ENCODE measurements at regions of chr1 and their contacts with region 1.

Region 1: GRCh38 chr1:224513787-224514209 is 79.2 kb upstream of the WDR26 start:
- DNase-seq: no peak
- H3K4me3 ChIP-seq: no peak overlapping the region
- H3K27ac ChIP-seq: no peak overlapping the region
- H3K27me3 ChIP-seq: no peaks in the 10 kb centered on the region
- CTCF ChIP-seq: peak; percentile 96

Region 2: DNA sequence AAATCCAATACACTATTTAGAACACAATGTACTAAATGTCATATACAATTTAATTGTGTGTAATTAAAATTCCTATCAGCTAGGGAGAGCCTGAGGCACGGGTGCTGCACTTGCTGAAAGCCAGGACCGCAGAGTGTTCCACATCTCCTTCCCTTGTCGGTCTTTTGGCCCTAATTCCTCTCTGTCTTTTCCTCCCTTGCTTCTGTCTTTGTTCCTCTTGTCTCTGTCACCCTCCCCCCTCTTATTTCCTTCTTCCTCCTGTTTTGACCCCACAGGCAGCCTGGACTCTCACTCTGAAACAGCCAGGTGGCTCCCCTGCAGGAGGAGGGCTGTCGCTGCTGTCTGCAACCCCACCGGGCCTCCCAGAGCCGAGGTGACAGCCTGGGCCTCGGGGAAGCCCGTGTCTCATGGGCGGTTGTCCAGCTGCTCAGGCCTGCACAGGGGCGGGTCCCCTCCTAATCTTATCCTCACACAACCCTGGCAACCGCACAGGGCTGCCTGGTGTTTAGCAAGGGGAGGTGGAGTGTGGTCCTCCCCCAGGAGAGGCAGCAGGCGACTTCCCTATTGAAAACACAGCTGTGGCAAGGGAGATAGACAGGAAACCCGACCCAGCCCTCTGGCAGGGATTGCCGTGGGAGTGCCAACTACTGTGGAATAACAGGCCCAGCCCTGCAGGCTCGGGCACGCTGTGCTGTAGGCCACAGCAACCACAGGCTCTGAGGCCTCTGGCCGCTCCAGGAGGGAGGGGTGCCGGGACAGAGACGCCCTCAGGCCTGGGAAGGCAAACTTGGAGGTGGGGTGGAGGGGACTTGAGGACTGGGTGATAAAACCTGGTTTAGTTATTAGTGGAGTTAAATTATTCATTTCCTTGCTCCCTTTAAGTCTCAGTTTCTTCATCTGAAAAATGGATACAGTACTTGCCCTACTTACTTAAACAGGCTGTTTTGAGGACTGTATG is 10.4 kb before region 1 on chr1:
- CTCF ChIA-PET with region 1: interaction called, 26 read pairs
- POLR2A ChIA-PET with region 1: no interaction called
- DNase-seq: peak; percentile 52
- H3K4me3 ChIP-seq: 0 out of 2 replicates have a peak overlapping the region, but pooled peaks have one; percentile 20
- H3K27ac ChIP-seq: peak overlapping the region; percentile 82
- H3K27me3 ChIP-seq: no peaks in the 10 kb centered on the region
- CTCF ChIP-seq: peak; percentile 26; the same call in 1 of the 2 replicates

Region 3: DNA sequence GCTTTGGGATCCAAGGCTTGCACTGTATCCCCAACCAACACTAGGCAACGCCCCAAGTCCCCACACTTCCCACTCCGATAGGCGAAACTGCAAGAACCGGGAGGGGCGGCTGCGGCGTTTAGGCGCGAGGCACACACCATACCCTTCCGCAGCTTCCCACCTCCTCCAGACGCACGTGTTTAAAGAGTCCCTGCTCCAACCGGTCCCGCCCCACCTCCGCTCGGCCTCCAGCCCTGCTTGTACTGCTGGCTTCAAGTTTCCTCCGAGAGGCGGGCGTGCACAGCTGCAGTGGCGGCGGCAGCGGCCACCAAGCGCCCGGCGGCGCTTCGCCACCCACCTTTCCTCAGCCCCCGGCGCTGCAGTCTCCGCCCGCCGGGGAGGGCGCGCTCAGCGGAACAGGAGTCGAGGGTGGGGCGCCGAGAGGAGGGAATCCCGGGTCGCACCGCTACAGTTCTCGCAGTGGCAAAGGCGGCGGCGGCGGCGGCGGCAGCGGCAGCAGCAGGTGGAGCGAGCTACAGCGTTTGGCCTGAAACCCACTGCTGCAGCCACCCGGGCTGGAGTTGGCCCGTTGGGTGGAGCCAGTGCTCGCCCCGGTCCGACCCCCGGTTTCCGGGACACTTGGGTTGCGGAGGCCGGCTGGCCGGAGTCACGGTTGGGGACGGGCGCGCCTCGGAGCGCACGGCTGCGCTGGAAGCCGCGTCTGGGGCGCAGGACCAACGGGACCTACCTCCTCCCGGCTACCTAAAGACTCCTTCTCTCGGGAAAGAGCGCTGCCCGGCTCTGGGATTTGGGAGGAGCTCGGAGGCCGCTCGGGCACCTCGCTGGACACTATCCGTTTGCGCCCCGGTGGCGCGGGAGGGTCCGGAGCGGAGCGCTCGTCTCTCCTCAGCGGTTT is 102.3 kb after region 1 on chr1 and contains the start of gene CNIH3:
- CTCF ChIA-PET with region 1: interaction called, 18 read pairs
- POLR2A ChIA-PET with region 1: no interaction called
- DNase-seq: no peak
- H3K4me3 ChIP-seq: peak within 1 kb of the TSS; percentile 70
- H3K27ac ChIP-seq: no peak within 1 kb of the TSS
- H3K27me3 ChIP-seq: peaks cover 19% of the 10 kb centered on the region
- CTCF ChIP-seq: no peak
- polyA plus RNA-seq, gene CNIH3: 5.6 and 6.5 TPM in 2 replicates

Region 4: DNA sequence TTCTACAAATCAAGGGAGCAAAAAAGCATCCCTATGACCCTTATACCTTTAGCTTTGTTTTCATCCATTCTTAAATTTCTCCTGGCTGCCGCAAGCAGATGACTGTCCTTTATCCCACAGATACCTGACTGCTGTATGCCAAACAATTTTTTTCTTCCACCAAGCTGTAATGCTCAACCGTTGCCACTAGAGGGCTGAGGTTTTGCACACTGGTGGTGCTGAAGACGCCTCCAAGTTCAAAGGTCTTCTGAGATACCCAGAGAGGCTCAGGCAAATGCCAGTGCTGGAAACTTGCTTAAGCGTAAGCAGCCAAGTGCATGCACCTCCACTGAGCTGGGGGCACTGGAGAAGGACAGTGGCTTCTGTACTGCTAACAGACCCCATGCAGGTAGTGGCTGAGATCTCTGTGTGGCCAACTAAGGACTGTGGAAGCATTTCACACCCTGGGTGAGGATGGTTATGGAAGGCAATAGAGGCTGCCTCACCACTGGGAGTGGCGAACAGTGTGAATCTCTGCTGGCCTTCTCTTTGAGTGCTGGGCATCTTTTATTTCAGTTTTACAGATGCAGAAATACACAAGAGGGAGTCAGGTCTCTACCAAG is 130.9 kb after region 1 on chr1:
- CTCF ChIA-PET with region 1: interaction called, 75 read pairs
- POLR2A ChIA-PET with region 1: no interaction called
- DNase-seq: no peak
- H3K4me3 ChIP-seq: no peak overlapping the region
- H3K27ac ChIP-seq: no peak overlapping the region
- H3K27me3 ChIP-seq: no peaks in the 10 kb centered on the region
- CTCF ChIP-seq: peak; percentile 90

Region 5: GRCh38 chr1:224668984-224669383 is 155.2 kb after region 1 on chr1:
- CTCF ChIA-PET with region 1: no interaction called
- POLR2A ChIA-PET with region 1: no interaction called
- DNase-seq: no peak
- H3K4me3 ChIP-seq: no peak overlapping the region
- H3K27ac ChIP-seq: no peak overlapping the region
- H3K27me3 ChIP-seq: no peaks in the 10 kb centered on the region
- CTCF ChIP-seq: no peak

Region 6: DNA sequence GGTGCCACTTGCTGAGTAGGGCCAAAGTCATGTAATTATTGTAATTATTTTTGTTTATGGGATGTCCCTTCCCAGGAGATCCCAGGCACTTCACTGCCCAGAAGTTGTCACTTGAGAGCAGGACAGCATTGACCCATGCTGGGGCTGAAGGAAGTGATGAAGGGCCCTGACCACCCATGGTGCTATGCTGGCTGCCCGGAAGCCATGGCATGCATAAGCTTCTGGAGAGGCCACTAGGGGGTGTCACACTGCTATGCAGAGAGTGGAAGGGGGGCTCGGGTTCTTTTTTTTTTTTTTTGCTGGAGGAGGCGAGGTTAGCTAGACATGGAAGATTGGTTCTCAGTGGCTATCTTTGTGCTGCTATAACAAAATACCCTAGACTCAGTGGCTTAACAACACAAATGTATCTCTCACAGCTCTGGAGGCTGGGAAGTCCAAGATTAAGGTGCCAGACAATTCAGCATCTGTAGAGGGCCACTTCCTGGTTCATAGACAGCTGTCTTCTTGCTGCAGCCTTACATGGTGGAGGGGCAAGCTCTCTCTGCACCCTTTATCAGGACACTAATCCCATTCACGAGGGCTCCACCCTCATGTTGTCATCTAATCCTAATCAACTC is 187.2 kb after region 1 on chr1:
- CTCF ChIA-PET with region 1: interaction called, 11 read pairs
- POLR2A ChIA-PET with region 1: no interaction called
- DNase-seq: no peak
- H3K4me3 ChIP-seq: no peak overlapping the region
- H3K27ac ChIP-seq: no peak overlapping the region
- H3K27me3 ChIP-seq: no peaks in the 10 kb centered on the region
- CTCF ChIP-seq: peak; percentile 42

Region 7: GRCh38 chr1:224863970-224864369 is 350.2 kb after region 1 on chr1:
- CTCF ChIA-PET with region 1: interaction called, 327 read pairs
- POLR2A ChIA-PET with region 1: no interaction called
- DNase-seq: no peak
- H3K4me3 ChIP-seq: no peak overlapping the region
- H3K27ac ChIP-seq: no peak overlapping the region
- H3K27me3 ChIP-seq: peaks cover 8% of the 10 kb centered on the region
- CTCF ChIP-seq: no peak

Region 8: GRCh38 chr1:224914292-224914900 is 400.6 kb after region 1 on chr1:
- CTCF ChIA-PET with region 1: interaction called, 11 read pairs
- POLR2A ChIA-PET with region 1: no interaction called
- DNase-seq: no peak
- H3K4me3 ChIP-seq: no peak overlapping the region
- H3K27ac ChIP-seq: no peak overlapping the region
- H3K27me3 ChIP-seq: peaks cover 3% of the 10 kb centered on the region
- CTCF ChIP-seq: no peak